BJ (cell line): ENCODE measurements at regions of chr1 and their contacts with region 1.

Region 1: DNA sequence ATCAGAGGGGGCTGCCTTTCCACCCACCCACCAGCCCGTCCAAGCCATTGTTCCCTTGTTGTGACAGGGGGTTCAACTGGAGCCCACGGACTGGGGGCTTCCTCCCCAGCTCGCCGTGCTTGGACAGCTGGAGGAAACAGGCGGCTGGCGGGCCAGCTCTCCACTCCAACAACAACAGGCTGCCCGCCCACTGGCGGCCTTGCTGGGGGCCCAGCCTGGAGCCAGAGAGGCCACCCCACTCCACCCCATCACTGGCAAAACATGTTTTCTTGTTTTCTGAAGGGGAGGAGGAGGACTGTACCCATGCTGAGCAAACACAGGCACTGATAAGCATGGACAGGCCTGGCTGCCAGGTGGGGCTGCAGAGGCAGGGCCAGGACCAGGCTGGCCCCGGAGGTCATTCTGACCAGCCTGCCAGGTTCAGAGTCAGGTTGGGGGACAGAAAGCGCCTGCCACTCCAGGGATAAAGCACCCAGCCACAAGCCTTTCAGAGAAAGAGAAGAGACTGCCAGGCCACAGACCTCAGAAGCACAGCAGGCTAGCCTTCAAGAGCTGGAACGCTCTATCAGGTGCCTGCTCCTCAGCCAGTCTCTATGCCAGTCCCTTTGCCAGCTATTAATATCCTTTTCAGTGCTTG is 32.8 kb downstream of the GJA4 start:
- DNase-seq: no peak
- H3K4me3 ChIP-seq: no peak overlapping the region
- H3K27me3 ChIP-seq: no peaks in the 10 kb centered on the region
- CTCF ChIP-seq: no peak

Region 2: DNA sequence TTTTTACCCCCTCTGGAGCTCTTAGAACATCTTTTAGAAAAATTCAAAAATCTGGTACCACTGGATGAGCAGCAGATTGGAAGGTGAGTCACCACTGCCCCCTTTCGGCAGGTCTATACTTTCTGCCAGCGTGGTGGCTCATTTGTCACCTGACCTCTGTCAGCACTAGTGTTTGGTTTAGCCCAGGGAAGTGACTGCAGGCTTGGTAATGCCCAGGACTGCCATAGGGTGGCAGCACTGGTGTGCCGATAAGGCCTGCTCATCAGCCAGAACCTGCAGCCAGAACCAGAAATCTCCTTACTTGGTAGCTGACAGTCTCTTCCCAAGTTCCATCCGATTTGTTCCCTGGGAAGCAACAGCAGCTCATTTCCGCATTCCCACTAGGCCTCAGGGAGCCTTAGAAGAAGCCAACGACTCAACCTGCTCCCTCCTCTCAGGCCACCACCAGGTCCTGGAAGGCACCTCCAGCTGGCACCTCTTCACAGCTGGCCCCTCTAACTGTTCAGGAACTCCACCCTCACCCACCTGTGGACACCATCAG is 27.2 kb after region 1 on chr1:
- CTCF ChIA-PET with region 1: interaction called, 12 read pairs
- POLR2A ChIA-PET with region 1: no interaction called
- DNase-seq: peak; percentile 70
- H3K4me3 ChIP-seq: no peak overlapping the region
- H3K27me3 ChIP-seq: no peaks in the 10 kb centered on the region
- CTCF ChIP-seq: peak; percentile 93

Region 3: DNA sequence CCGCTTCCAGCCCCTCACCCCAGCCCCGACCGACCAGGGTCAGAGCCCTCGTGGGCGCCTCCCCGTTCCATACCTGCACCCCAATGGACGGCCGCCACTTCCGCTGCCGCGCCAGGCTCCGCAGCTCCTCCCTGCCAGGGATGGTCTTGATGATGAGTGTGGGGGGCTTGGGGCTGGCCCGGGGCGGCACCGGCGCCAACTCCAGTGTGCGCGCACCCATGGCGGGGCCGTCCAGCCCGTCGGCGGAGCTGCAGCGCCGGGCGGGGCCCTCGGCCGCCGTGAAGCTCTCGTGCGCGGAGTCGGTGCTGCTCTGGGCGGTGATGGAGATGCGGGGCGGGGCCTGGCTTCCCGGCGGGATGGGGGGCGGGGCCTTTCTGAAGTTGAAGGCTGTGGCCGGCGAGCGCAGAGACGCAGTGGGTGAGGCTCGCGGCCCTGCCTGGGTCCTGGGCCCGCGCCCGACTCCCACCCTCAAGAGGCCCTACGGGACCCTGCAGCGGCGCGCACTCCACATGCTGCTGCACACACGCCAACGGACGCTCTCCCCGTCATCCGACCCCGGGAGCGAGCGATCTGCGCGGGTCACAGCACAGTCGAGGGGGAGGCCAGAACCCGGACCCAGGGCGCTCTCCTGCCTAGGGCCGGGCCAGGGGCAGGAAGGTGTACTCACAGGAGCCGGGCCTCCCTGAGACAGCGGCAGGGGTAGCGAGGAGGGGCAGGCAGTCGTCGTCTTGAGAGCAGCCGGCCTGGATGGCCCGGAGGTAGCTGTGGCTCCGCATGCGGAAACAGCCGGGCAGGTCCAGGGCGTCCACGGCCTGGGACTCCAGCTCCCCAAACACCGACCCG is 60.1 kb after region 1 on chr1:
- CTCF ChIA-PET with region 1: no interaction called
- POLR2A ChIA-PET with region 1: no interaction called
- DNase-seq: no peak
- H3K4me3 ChIP-seq: peak overlapping the region; percentile 37
- H3K27me3 ChIP-seq: peaks cover 7% of the 10 kb centered on the region
- CTCF ChIP-seq: no peak